Tibial artery (tissue), 4 donors: ENCODE measurements at regions of chr4 and their contacts with region 1.

Region 1: GRCh38 chr4:88366460-88366859 is 12.2 kb upstream of the HERC6 start:
- DNase-seq: no peak
- H3K4me3 ChIP-seq: no peak overlapping the region
- H3K27ac ChIP-seq: no peak overlapping the region
- H3K4me1 ChIP-seq: no peaks in the 10 kb centered on the region
- H3K27me3 ChIP-seq: no peaks in the 10 kb centered on the region
- CTCF ChIP-seq: no peak

Region 2: GRCh38 chr4:88225232-88226105 is 141.0 kb before region 1 on chr4:
- intact Hi-C with region 1: loop called (anchors 10 kb)
- DNase-seq: no peak
- H3K4me3 ChIP-seq: no peak overlapping the region
- H3K27ac ChIP-seq: no peak overlapping the region
- H3K4me1 ChIP-seq: peaks cover 0 to 2% (median under 1%) of the 10 kb centered on the region in 4 donors
- H3K27me3 ChIP-seq: no peaks in the 10 kb centered on the region
- CTCF ChIP-seq: no peak